ENCODE measurements at regions of chr2 and their contacts with region 1.

Region 1: GRCh38 chr2:95022309-95023221 is 2.9 kb upstream of the MAL start:
- DNase-seq: peak; percentile 77 to 92 (median 89)
- H3K4me3 ChIP-seq: peak overlapping the region in 1 of 7 experiments; percentile 35
- H3K27ac ChIP-seq: no peak overlapping the region
- H3K4me1 ChIP-seq: peaks cover 0 to 29% (median 25%) of the 10 kb centered on the region in 4 experiments
- H3K27me3 ChIP-seq: peaks cover 0 to 49% (median 21%) of the 10 kb centered on the region in 5 experiments

Region 2: GRCh38 chr2:95043300-95044093 is 20.9 kb after region 1 on chr2:
- CTCF ChIA-PET with region 1: interaction called, 20 read pairs
- POLR2A ChIA-PET with region 1: interaction called, 4 read pairs
- DNase-seq: peak; percentile 24 to 86 (median 82)
- H3K4me3 ChIP-seq: no peak overlapping the region
- H3K27ac ChIP-seq: no peak overlapping the region
- H3K4me1 ChIP-seq: peaks cover 0 to 28% (median 11%) of the 10 kb centered on the region in 4 experiments
- H3K27me3 ChIP-seq: peaks cover 0 to 3% (median 0%) of the 10 kb centered on the region in 5 experiments

Region 3: GRCh38 chr2:95053543-95053942 is 31.0 kb after region 1 on chr2:
- CTCF ChIA-PET with region 1: interaction called, 41 read pairs
- POLR2A ChIA-PET with region 1: interaction called, 5 read pairs
- DNase-seq: peak; percentile 28 to 56 (median 54)
- H3K4me3 ChIP-seq: peak overlapping the region in 1 of 7 experiments; percentile 49
- H3K27ac ChIP-seq: no peak overlapping the region
- H3K4me1 ChIP-seq: peaks cover 0 to 4% (median 2%) of the 10 kb centered on the region in 4 experiments
- H3K27me3 ChIP-seq: peaks cover 0 to 12% (median 0%) of the 10 kb centered on the region in 5 experiments

Region 4: GRCh38 chr2:95115418-95115817 is 92.9 kb after region 1 on chr2:
- CTCF ChIA-PET with region 1: interaction called, 29 read pairs
- POLR2A ChIA-PET with region 1: no interaction called
- DNase-seq: peak; percentile 67 to 81 (median 79)
- H3K4me3 ChIP-seq: no peak overlapping the region
- H3K27ac ChIP-seq: no peak overlapping the region
- H3K4me1 ChIP-seq: peaks cover 0 to 13% (median 8%) of the 10 kb centered on the region in 4 experiments
- H3K27me3 ChIP-seq: no peaks in the 10 kb centered on the region

Region 5: DNA sequence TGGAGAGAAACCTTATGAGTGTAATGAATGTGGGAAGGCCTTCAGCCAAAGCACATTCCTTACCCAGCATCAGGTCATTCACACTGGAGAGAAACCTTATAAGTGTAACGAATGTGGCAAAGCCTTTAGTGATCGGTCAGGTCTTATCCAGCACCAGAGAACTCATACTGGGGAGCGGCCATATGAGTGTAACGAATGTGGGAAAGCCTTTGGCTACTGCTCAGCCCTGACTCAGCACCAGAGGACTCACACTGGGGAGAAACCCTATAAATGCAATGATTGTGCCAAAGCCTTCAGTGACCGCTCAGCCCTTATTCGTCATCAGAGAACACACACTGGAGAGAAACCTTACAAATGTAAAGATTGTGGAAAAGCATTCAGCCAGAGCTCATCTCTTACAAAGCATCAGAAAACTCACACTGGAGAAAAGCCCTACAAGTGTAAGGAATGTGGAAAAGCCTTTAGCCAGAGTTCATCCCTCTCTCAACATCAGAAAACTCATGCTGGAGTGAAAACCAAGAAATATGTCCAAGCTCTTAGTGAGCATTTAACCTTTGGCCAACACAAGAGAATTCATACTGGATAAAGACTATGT is 192.6 kb after region 1 on chr2:
- CTCF ChIA-PET with region 1: no interaction called
- POLR2A ChIA-PET with region 1: no interaction called
- DNase-seq: no peak
- H3K4me3 ChIP-seq: no peak overlapping the region
- H3K27ac ChIP-seq: no peak overlapping the region
- H3K4me1 ChIP-seq: no peaks in the 10 kb centered on the region
- H3K27me3 ChIP-seq: no peaks in the 10 kb centered on the region

Measured in common myeloid progenitor, CD34-positive (primary cell).